ENCODE measurements at regions of chr2 and their contacts with region 1.

Region 1: GRCh38 chr2:197152451-197153228 is 157.9 kb downstream of the ANKRD44 start:
- DNase-seq: peak in 9 of 14 experiments; percentile 16 to 66 (median 37)
- ATAC-seq: peak; percentile 93
- H3K4me3 ChIP-seq: no peak overlapping the region
- H3K4me3 Mint-ChIP-seq: peak overlapping the region; percentile 30
- H3K27ac ChIP-seq: peak overlapping the region; percentile 31 to 63
- H3K27ac Mint-ChIP-seq: peak overlapping the region; percentile 85
- H3K4me1 ChIP-seq: peaks cover 44% of the 10 kb centered on the region
- H3K4me1 Mint-ChIP-seq: peaks cover 85% of the 10 kb centered on the region
- H3K27me3 ChIP-seq: no peaks in the 10 kb centered on the region
- H3K27me3 Mint-ChIP-seq: no peaks in the 10 kb centered on the region
- CTCF ChIP-seq: peak; percentile 37

Region 2: DNA sequence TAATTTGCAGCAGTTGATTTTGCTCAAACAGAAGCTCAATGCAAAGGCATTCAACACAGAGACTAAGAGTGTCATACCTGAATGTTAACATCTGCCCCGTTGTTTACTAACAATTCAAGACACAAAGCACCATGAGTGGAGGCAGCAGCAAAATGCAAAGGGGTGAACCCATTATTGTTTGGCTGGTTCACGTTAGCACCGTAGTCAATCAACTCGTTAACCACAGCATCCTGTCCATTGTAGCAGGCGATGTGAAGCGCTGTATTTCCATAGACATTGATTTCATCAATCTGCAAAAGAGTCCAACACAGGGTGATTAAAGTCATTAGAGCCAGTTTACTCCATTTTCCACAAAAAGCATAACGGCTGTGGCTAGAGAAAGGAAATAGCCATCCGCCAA is 31.4 kb before region 1 on chr2:
- CTCF ChIA-PET with region 1: interaction called, 11 read pairs
- POLR2A ChIA-PET with region 1: interaction called, 12 read pairs
- intact Hi-C with region 1: no loop called
- DNase-seq: peak in 2 of 14 experiments; percentile 26 to 43
- ATAC-seq: peak; percentile 69
- H3K4me3 ChIP-seq: no peak overlapping the region
- H3K4me3 Mint-ChIP-seq: peak overlapping the region; percentile 40
- H3K27ac ChIP-seq: peak overlapping the region; percentile 21 to 35
- H3K27ac Mint-ChIP-seq: peak overlapping the region; percentile 84
- H3K4me1 ChIP-seq: peaks cover 18% of the 10 kb centered on the region
- H3K4me1 Mint-ChIP-seq: peaks cover 64% of the 10 kb centered on the region
- H3K27me3 ChIP-seq: no peaks in the 10 kb centered on the region
- H3K27me3 Mint-ChIP-seq: no peaks in the 10 kb centered on the region
- CTCF ChIP-seq: no peak

Region 3: DNA sequence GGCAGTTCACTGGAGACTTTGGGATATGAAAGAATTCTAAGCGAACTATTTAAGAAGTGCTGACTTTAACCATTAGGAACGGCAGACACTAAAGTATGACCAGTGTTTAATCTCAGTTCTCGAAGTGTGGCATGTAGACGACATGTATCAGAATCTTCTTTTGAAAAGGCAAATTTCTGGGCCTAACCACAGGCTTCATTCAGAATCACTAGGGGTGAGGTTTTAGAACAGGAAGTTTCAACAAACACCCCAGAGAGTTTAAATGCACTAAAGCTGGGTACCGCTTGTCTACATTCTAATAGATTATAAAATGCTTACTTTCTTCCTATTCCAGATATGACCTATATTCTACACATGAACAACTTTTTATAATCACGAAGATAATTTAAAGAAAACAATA is 22.3 kb before region 1 on chr2:
- CTCF ChIA-PET with region 1: interaction called, 11 read pairs
- POLR2A ChIA-PET with region 1: interaction called, 3 read pairs
- intact Hi-C with region 1: no loop called
- DNase-seq: peak in 4 of 14 experiments; percentile 27 to 56 (median 56)
- ATAC-seq: peak; percentile 94
- H3K4me3 ChIP-seq: no peak overlapping the region
- H3K4me3 Mint-ChIP-seq: peak overlapping the region; percentile 11
- H3K27ac ChIP-seq: peak overlapping the region in 1 of 2 donors; percentile 49
- H3K27ac Mint-ChIP-seq: peak overlapping the region; percentile 85
- H3K4me1 ChIP-seq: peaks cover 37% of the 10 kb centered on the region
- H3K4me1 Mint-ChIP-seq: peaks cover 92% of the 10 kb centered on the region
- H3K27me3 ChIP-seq: no peaks in the 10 kb centered on the region
- H3K27me3 Mint-ChIP-seq: no peaks in the 10 kb centered on the region
- CTCF ChIP-seq: no peak

Region 4: DNA sequence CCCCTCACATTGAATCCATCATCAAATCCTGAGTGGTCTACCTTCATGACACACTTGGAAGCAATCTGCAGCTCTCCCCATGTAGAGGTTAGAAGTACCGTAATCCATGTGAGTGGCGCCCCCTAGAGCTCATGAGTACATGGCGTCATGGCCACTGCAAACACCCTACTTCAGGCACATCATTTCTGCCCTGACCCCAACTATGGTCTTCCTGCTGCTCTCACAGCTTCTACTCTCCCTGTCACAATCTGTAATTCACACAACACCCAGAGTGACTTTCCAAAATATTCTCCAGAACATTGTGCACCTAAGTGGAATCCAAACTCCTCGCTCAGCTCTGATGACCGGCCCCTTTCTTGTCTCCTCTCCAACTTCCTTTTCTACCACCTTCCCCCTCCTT is 16.1 kb after region 1 on chr2:
- CTCF ChIA-PET with region 1: interaction called, 8 read pairs
- POLR2A ChIA-PET with region 1: interaction called, 6 read pairs
- intact Hi-C with region 1: loop called in 1 of 2 experiments (anchors 2 kb)
- DNase-seq: peak; percentile 51 to 83 (median 66)
- ATAC-seq: peak; percentile 92
- H3K4me3 ChIP-seq: no peak overlapping the region
- H3K4me3 Mint-ChIP-seq: peak overlapping the region; percentile 2
- H3K27ac ChIP-seq: peak overlapping the region in 1 of 2 donors; percentile 15
- H3K27ac Mint-ChIP-seq: peak overlapping the region; percentile 71
- H3K4me1 ChIP-seq: peaks cover 52% of the 10 kb centered on the region
- H3K4me1 Mint-ChIP-seq: peaks cover 80% of the 10 kb centered on the region
- H3K27me3 ChIP-seq: no peaks in the 10 kb centered on the region
- H3K27me3 Mint-ChIP-seq: no peaks in the 10 kb centered on the region
- CTCF ChIP-seq: peak; percentile 60

Region 5: GRCh38 chr2:197931661-197932312 is 779.1 kb after region 1 on chr2:
- CTCF ChIA-PET with region 1: no interaction called
- POLR2A ChIA-PET with region 1: no interaction called
- intact Hi-C with region 1: no loop called
- DNase-seq: no peak
- ATAC-seq: no peak
- H3K4me3 ChIP-seq: no peak overlapping the region
- H3K4me3 Mint-ChIP-seq: no peak overlapping the region
- H3K27ac ChIP-seq: no peak overlapping the region
- H3K27ac Mint-ChIP-seq: no peak overlapping the region
- H3K4me1 ChIP-seq: no peaks in the 10 kb centered on the region
- H3K4me1 Mint-ChIP-seq: peaks cover 71% of the 10 kb centered on the region
- H3K27me3 ChIP-seq: no peaks in the 10 kb centered on the region
- H3K27me3 Mint-ChIP-seq: no peaks in the 10 kb centered on the region
- CTCF ChIP-seq: no peak